Mammary epithelial cell (primary cell): ENCODE measurements at regions of chr5 and their contacts with region 1.

Region 1: GRCh38 chr5:4700069-4700468 is 440.1 kb upstream of the ADAMTS16 start:
- DNase-seq: peak; percentile 64
- H3K4me3 ChIP-seq: no peak overlapping the region
- H3K27ac ChIP-seq: no peak overlapping the region
- H3K4me1 ChIP-seq: no peaks in the 10 kb centered on the region
- H3K27me3 ChIP-seq: no peaks in the 10 kb centered on the region
- CTCF ChIP-seq: peak; percentile 79 to 88

Region 2: DNA sequence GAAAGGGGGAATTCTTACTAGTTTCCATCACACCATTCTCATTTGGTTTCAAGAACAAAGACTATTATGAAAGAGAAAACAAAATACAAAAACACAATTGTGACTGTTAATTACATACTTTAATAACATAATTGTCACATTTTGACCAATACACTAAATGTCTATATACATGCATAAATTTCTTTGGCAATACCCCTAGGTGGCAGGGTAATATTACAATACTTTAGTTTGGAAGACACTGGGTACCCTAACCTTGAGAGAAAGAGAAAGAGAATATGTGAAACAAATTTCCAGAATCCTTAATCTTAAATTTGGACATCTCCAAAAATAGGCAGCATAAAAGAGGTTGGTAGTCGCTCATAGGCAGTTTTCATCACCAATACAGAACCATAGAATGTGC is 179.5 kb before region 1 on chr5:
- CTCF ChIA-PET with region 1: no interaction called
- dilution Hi-C with region 1: no loop called
- in situ Hi-C with region 1: no loop called
- intact Hi-C with region 1: loop called (anchors 2 kb)
- DNase-seq: no peak
- H3K4me3 ChIP-seq: no peak overlapping the region
- H3K27ac ChIP-seq: no peak overlapping the region
- H3K4me1 ChIP-seq: no peaks in the 10 kb centered on the region
- H3K27me3 ChIP-seq: no peaks in the 10 kb centered on the region
- CTCF ChIP-seq: peak in 1 of 2 donors; percentile 25

Region 3: DNA sequence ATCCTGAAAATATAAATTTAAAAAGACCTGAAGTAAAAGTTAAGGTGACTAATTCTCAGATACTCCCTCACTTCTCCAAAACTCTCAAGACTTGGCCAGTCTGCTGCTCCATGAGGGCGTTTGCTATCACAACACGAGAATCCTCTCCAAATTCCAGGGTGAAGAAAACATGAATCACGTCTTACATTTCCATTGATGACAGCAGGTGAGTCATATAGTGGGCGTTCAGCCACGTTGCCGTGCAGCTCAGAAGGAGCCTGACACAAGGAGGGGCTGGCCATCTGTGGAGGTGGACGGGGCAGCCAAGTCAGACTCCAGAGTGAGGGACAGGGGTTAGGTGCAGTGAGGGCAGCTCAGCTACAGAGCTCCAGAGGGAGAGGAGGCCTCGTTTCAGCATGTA is 115.1 kb before region 1 on chr5:
- CTCF ChIA-PET with region 1: no interaction called
- dilution Hi-C with region 1: no loop called
- in situ Hi-C with region 1: no loop called
- intact Hi-C with region 1: loop called (anchors 1 kb)
- DNase-seq: peak; percentile 94
- H3K4me3 ChIP-seq: no peak overlapping the region
- H3K27ac ChIP-seq: peak overlapping the region; percentile 41
- H3K4me1 ChIP-seq: peaks cover 13% of the 10 kb centered on the region
- H3K27me3 ChIP-seq: no peaks in the 10 kb centered on the region
- CTCF ChIP-seq: peak in 1 of 2 donors; percentile 32

Region 4: DNA sequence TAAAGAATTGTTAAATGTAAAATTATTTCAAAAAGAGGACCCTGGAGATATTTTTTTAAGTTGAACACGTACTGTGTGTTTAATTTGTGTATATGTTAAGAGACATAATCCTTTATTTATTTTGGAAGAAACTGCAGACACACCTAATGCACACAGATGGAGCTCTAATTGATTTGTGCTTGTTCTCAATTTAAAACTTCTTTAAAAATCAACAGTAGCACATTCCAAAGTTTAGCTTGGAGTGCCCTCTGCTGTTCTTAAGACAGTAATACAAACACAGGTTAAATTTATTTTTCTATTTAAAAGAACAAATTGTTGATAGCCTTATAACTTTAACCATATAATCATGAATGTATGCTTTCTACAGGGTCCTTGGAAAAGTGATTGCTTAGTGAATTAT is 162.4 kb after region 1 on chr5:
- CTCF ChIA-PET with region 1: interaction called, 35 read pairs
- dilution Hi-C with region 1: no loop called
- in situ Hi-C with region 1: no loop called
- intact Hi-C with region 1: loop called (anchors 10 kb)
- DNase-seq: peak; percentile 14
- H3K4me3 ChIP-seq: no peak overlapping the region
- H3K27ac ChIP-seq: no peak overlapping the region
- H3K4me1 ChIP-seq: no peaks in the 10 kb centered on the region
- H3K27me3 ChIP-seq: no peaks in the 10 kb centered on the region
- CTCF ChIP-seq: peak; percentile 46 to 63

Region 5: GRCh38 chr5:4868109-4868735 is 168.2 kb after region 1 on chr5:
- CTCF ChIA-PET with region 1: no interaction called
- dilution Hi-C with region 1: no loop called
- in situ Hi-C with region 1: no loop called
- intact Hi-C with region 1: loop called (anchors 10 kb)
- DNase-seq: peak; percentile 23
- H3K4me3 ChIP-seq: no peak overlapping the region
- H3K27ac ChIP-seq: no peak overlapping the region
- H3K4me1 ChIP-seq: no peaks in the 10 kb centered on the region
- H3K27me3 ChIP-seq: no peaks in the 10 kb centered on the region
- CTCF ChIP-seq: peak; percentile 88 to 95